Activated CD4-positive, alpha-beta T cell treated with anti-CD3 and anti-CD28 coated beads for 36 hours (primary cell): ENCODE measurements at regions of chr5 and their contacts with region 1.

Region 1: GRCh38 chr5:180328296-180329137 is 24.6 kb downstream of the GFPT2 start:
- DNase-seq: peak; percentile 93
- ATAC-seq: peak; percentile 98
- H3K4me3 Mint-ChIP-seq: no peak overlapping the region
- H3K27ac Mint-ChIP-seq: no peak overlapping the region
- H3K4me1 Mint-ChIP-seq: no peaks in the 10 kb centered on the region
- H3K27me3 Mint-ChIP-seq: peaks cover 9% of the 10 kb centered on the region

Region 2: GRCh38 chr5:180098961-180099732 is 229.4 kb before region 1 on chr5:
- CTCF ChIA-PET with region 1: no interaction called
- POLR2A ChIA-PET with region 1: no interaction called
- intact Hi-C with region 1: no loop called
- DNase-seq: no peak
- ATAC-seq: no peak
- H3K4me3 Mint-ChIP-seq: no peak overlapping the region
- H3K27ac Mint-ChIP-seq: no peak overlapping the region
- H3K4me1 Mint-ChIP-seq: no peaks in the 10 kb centered on the region
- H3K27me3 Mint-ChIP-seq: no peaks in the 10 kb centered on the region

Region 3: DNA sequence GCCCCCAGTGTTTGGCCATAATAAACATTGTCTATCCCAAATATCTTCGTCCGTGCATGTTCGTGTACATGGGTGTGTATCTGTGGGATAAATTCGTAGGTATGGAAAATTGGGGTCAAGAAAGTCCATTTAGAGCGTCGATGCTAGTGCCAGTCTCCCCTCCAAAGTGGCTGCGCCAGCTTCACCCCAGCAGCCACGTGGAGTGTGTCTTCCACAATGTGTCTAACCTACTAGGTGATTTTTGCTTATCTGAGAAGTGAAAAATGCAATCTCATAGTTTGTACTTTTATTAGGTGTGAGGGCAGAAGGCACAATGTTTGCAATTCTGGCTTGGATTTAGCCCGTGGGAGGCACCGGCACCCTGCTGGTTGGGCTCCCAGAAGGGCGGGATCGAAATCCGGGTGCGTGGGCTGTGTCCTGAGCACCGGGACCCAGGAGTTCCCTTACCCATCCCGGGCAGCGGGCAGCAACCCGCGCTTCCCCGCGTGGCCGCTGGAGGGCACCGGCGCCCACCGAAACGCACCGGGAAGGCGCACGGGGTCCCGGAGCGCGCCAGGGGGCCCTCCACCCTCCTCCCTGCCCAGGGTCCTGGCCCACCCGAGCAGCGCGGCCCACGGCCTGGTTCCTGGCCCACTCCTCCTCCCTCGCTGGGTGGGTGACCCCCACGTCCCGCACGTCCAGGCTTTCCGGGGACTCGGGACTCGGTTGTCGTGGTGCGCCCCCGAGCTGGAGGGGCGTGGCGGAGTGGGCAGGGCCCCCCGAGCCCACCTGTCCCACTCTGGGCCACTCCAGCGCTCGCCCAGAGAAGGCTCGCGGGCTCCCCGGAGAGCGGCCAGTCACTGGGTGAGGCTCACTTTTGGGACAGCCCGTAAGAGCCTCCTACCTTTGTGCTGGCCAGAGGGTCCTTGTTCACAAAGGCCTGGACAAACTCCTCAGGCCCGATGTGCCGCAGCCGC is 201.5 kb before region 1 on chr5:
- CTCF ChIA-PET with region 1: interaction called, 4 read pairs
- POLR2A ChIA-PET with region 1: no interaction called
- intact Hi-C with region 1: loop called (anchors 1 to 5 kb)
- DNase-seq: peak; percentile 66
- ATAC-seq: peak; percentile 85
- H3K4me3 Mint-ChIP-seq: no peak overlapping the region
- H3K27ac Mint-ChIP-seq: no peak overlapping the region
- H3K4me1 Mint-ChIP-seq: no peaks in the 10 kb centered on the region
- H3K27me3 Mint-ChIP-seq: peaks cover 14% of the 10 kb centered on the region

Region 4: DNA sequence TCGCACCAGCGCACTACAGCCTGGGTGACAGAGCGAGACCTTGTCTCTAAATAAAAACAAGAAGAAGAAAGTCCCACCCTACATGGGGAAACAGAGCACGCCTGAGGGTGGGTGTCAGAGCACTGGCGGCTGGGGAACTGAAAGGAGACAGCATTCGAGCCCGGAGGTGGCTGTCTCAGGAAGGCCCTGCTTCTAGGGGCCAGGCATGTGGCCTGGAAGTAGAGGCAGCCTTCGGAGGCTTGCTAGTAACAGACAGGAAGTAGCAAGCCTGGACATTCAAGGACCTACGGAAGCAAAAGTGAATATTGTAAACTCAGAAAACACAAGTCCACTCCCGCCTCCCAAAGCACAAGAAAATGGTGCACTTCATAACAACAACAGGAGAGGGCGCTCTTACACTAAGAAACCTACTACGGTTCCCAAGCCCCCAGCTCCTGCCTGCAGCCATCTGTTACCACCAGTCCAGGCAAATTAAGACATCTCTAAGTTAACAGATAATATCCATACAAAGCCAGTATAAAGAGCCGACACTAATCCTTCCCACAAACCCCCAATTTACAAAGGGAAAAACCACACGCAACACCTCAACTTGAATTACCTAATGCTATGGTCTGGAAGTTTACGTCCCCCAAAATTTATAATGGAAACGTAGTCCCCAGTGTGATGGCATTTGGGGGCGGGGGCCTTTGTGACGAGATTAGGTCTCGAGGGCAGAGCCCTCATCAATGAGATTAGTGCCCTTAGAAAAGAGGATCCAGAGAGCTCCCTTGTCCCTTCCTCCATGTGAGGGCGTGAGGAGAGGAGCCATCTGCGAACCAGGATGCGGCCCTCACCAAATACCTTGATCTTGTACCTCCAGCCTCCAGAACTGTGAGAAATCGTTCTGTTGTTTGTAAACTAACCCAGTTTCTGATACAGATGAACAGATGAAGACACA is 127.2 kb before region 1 on chr5:
- CTCF ChIA-PET with region 1: interaction called, 7 read pairs
- POLR2A ChIA-PET with region 1: no interaction called
- intact Hi-C with region 1: loop called in 1 of 2 experiments (anchors 5 kb)
- DNase-seq: peak; percentile 38
- ATAC-seq: no peak
- H3K4me3 Mint-ChIP-seq: no peak overlapping the region
- H3K27ac Mint-ChIP-seq: no peak overlapping the region
- H3K4me1 Mint-ChIP-seq: no peaks in the 10 kb centered on the region
- H3K27me3 Mint-ChIP-seq: peaks cover 21% of the 10 kb centered on the region

Region 5: DNA sequence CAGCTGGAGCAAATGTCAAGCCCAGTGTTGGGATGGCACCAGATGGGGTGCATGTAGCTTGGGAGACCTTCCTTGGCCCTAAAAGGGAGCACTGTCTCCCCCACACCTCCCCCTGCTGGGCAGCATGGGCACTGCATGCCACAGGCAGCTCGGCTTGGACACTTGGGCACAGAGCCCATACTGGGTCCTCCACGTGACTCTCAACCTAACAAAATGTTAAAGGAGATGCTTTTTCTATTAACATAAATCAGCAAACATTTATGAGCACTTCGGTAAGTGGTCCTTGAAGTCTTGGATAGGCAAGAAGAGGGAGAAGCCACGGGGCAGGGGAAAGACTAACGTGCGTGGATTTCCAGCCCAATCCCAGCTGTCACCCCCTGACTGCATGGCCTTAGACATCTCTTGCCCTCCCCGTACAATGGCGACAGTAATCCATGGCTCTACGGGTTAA is 12.7 kb before region 1 on chr5:
- CTCF ChIA-PET with region 1: interaction called, 34 read pairs
- POLR2A ChIA-PET with region 1: no interaction called
- intact Hi-C with region 1: no loop called
- DNase-seq: peak; percentile 84
- ATAC-seq: peak; percentile 66
- H3K4me3 Mint-ChIP-seq: no peak overlapping the region
- H3K27ac Mint-ChIP-seq: no peak overlapping the region
- H3K4me1 Mint-ChIP-seq: no peaks in the 10 kb centered on the region
- H3K27me3 Mint-ChIP-seq: peaks cover 4% of the 10 kb centered on the region

Region 6: DNA sequence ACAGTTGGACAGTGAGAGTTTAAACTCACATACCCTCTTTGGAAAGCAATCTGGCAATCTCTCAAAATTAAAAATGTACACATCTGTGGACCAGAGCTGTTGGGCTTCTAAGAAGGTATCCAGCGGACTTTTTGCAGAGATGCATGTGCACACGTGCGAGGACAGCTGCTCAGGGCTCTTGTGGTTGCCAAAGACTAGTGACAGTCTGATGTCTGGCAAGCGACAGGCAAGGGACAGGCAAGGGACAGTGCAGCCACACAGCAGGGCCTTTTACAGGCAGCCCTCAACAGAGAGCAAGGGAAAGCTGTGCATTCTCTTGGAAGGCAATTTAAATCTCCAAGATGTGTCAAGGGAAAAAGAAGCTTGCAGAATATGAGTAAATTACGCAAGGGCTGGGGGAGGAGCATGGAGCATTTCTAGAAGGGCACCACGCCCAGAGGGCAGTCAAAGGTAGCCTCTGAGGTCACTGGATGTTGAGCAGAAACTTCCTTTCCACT is 15.4 kb after region 1 on chr5:
- CTCF ChIA-PET with region 1: interaction called, 10 read pairs
- POLR2A ChIA-PET with region 1: no interaction called
- intact Hi-C with region 1: no loop called
- DNase-seq: no peak
- ATAC-seq: no peak
- H3K4me3 Mint-ChIP-seq: no peak overlapping the region
- H3K27ac Mint-ChIP-seq: no peak overlapping the region
- H3K4me1 Mint-ChIP-seq: no peaks in the 10 kb centered on the region
- H3K27me3 Mint-ChIP-seq: peaks cover 12% of the 10 kb centered on the region

Region 7: GRCh38 chr5:180399401-180400215 is 71.1 kb after region 1 on chr5:
- CTCF ChIA-PET with region 1: interaction called, 12 read pairs
- POLR2A ChIA-PET with region 1: no interaction called
- intact Hi-C with region 1: no loop called
- DNase-seq: no peak
- ATAC-seq: no peak
- H3K4me3 Mint-ChIP-seq: no peak overlapping the region
- H3K27ac Mint-ChIP-seq: no peak overlapping the region
- H3K4me1 Mint-ChIP-seq: no peaks in the 10 kb centered on the region
- H3K27me3 Mint-ChIP-seq: peaks cover 5% of the 10 kb centered on the region

Region 8: DNA sequence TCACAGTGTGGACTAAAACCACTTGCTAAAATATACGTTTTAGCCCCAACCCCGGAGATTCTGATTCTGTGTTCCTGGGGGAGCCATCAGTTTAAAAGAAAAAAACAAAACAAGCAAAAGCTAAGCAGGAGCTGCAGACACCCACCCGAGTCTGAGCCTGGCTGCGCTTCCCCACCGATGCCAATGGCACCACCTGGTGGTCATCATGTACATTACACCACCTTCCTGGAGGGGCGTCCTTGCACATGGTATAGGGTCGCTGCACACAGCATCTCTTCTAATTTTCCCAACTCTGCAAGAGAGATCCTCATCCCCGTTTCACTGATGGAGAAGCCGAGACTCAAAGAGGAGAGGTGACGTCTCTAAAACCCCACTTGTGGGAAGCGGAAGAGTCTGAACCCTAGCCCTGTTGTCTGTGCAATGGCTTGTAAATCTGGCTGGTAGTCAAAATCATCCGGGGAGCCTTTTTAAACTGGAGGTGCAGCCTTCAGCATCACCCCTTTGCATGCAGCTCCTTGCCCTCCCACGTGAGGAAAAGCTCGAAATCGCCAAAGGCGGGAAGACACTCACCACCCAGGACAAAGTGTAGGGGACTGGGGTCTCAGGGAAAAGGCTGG is 142.6 kb after region 1 on chr5:
- CTCF ChIA-PET with region 1: interaction called, 9 read pairs
- POLR2A ChIA-PET with region 1: no interaction called
- intact Hi-C with region 1: loop called in 1 of 2 experiments (anchors 5 kb)
- DNase-seq: peak; percentile 70
- ATAC-seq: peak; percentile 82
- H3K4me3 Mint-ChIP-seq: no peak overlapping the region
- H3K27ac Mint-ChIP-seq: no peak overlapping the region
- H3K4me1 Mint-ChIP-seq: no peaks in the 10 kb centered on the region
- H3K27me3 Mint-ChIP-seq: peaks cover 4% of the 10 kb centered on the region

Region 9: DNA sequence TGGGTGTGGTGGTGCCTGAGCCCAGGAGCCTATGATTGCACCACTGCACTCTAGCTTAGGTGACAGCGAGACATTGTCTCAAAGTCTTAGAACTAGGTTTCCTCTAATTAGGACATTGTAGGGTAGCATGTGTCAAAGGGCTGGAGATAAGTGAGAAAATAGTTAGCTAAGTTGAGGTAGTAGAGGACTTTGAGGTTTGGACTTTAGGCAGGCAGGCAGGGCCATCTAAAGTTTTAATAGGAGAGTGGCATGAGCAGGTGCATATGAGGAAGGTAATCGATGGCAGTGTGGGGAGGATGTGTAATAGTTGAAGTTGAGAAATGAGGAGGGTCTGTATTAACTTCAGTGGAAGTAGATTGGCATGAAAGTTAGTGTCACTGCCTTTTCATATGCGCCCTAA is 186.8 kb after region 1 on chr5:
- CTCF ChIA-PET with region 1: no interaction called
- POLR2A ChIA-PET with region 1: no interaction called
- intact Hi-C with region 1: no loop called
- DNase-seq: no peak
- ATAC-seq: no peak
- H3K4me3 Mint-ChIP-seq: no peak overlapping the region
- H3K27ac Mint-ChIP-seq: no peak overlapping the region
- H3K4me1 Mint-ChIP-seq: peaks cover 42% of the 10 kb centered on the region
- H3K27me3 Mint-ChIP-seq: no peaks in the 10 kb centered on the region